Panc1 (cell line): ENCODE measurements at regions of chr2 and their contacts with region 1.

Region 1: DNA sequence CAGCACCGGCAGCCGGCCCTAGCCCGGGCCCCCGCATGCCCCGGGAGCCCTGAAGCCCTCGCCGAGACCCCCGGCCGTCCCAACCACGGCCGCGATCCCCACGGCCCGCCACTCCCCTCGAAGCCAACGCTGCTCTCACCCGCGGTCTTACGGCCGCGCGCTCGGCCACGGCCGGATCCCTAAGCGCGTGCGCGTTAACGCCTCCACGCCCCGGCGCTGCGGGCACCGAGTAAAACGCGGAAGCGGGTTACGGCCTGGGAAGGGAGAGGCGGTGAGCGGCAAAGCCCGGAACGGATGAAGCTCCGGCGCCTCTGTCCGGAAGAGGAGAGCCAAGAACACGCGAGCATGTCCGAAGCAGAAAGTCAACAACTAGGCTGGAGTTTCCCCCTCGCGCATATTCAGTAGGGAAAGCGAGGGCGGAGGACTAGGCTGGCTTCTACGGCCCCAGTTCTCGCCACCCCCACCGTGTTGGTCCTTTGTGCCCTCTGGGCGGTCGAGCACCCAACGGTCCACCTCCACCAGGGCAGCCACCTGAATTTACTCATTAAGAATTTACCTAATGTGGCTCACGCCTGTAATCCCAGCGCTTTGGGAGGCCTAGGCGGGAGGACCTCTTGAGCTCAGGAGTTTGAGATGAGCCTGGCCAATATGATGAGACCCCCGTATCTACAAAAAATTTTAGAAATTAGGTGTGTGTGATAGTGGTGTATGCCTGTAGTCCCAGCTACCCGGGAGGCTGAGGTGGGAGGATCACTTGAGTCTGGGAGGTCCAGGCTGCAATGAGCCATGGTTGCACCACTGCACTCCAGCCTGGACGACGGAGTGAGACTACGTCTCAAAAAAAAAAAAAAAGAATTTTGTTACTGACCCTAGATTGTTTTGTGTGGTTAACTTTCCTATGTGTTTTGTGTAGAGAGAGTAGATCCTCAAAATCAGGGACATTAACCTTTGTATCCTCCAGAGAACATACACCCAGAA is at the start of gene KANSL3:
- DNase-seq: peak; percentile 59
- ATAC-seq: peak; percentile 89
- H3K4me3 ChIP-seq: peak within 1 kb of the TSS; percentile 76 to 86
- H3K27ac ChIP-seq: peak within 1 kb of the TSS; percentile 90
- H3K4me1 ChIP-seq: peaks cover 10% of the 10 kb centered on the region
- H3K27me3 ChIP-seq: no peaks in the 10 kb centered on the region
- CTCF ChIP-seq: no peak
- total RNA-seq, gene KANSL3: 50.3 TPM

Region 2: GRCh38 chr2:96145036-96145847 is 493.2 kb before region 1 on chr2 and contains the start of gene DUSP2:
- CTCF ChIA-PET with region 1: no interaction called
- POLR2A ChIA-PET with region 1: no interaction called
- in situ Hi-C with region 1: no loop called
- intact Hi-C with region 1: no loop called
- DNase-seq: no peak
- ATAC-seq: peak; percentile 78
- H3K4me3 ChIP-seq: peak within 1 kb of the TSS; percentile 46 to 55
- H3K27ac ChIP-seq: peak within 1 kb of the TSS; percentile 77
- H3K4me1 ChIP-seq: peaks cover 29% of the 10 kb centered on the region
- H3K27me3 ChIP-seq: no peaks in the 10 kb centered on the region
- CTCF ChIP-seq: no peak
- total RNA-seq, gene DUSP2: 4.9 TPM

Region 3: GRCh38 chr2:96427917-96428316 is 210.5 kb before region 1 on chr2:
- CTCF ChIA-PET with region 1: no interaction called
- POLR2A ChIA-PET with region 1: interaction called, 15 read pairs
- in situ Hi-C with region 1: no loop called
- intact Hi-C with region 1: no loop called
- DNase-seq: peak; percentile 82
- ATAC-seq: peak; percentile 94
- H3K4me3 ChIP-seq: no peak overlapping the region
- H3K27ac ChIP-seq: peak overlapping the region; percentile 62
- H3K4me1 ChIP-seq: no peaks in the 10 kb centered on the region
- H3K27me3 ChIP-seq: no peaks in the 10 kb centered on the region
- CTCF ChIP-seq: no peak